CD4-positive, alpha-beta memory T cell (primary cell): ENCODE measurements at regions of chr1 and their contacts with region 1.

Region 1: DNA sequence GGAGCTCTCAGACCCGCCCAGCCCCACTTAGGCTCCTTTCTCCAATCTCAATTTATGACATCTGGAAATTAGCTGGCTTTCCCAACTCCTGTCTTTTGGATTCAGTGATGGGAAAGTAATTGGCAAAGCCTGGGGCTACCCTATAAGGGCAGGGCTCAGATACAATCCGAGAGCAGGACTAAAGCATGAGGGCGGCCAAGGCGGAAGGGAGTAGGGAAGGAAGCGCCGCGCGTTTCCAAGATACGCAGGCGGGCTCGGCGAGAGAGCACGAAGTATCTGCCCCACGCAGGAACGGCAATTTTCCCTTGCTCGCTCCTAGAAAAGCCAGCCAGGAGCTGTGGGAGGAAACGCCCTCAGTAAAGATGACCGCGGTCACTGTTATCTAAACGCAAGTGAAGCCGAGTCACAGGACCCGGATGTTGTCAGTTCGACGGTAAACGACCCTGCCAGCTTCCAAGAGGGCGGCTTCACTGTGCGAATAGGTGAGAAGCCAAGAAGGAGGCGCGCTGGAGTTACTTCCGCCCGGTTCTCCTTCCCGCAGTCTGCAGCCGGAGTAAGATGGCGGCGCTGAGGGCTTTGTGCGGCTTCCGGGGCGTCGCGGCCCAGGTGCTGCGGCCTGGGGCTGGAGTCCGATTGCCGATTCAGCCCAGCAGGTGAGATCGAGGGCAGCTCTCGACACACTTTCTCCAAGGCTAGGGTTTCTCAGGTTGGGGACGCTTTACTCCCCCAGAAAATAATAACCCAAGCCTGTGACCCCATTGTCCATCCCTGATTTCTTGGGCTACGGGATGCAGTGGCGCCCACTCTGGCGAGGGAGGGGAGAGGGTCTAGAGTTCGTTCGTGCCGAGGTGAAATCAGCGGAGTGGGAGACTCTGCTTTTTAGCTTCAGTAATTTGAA is at the start of gene NDUFS2:
- DNase-seq: peak; percentile 91 to 98 (median 94)
- H3K4me3 ChIP-seq: peak within 1 kb of the TSS; percentile 85 to 98
- H3K4me3 Mint-ChIP-seq: peak within 1 kb of the TSS; percentile 95 to 98 (median 96)
- H3K27ac ChIP-seq: peak within 1 kb of the TSS; percentile 96
- H3K27ac Mint-ChIP-seq: peak within 1 kb of the TSS; percentile 94 to 99 (median 99)
- H3K4me1 ChIP-seq: peaks cover 66% of the 10 kb centered on the region
- H3K4me1 Mint-ChIP-seq: peaks cover 32 to 68% (median 56%) of the 10 kb centered on the region in 4 donors
- H3K27me3 ChIP-seq: no peaks in the 10 kb centered on the region
- H3K27me3 Mint-ChIP-seq: peaks cover 0 to 1% of the 10 kb centered on the region in 2 donors
- total RNA-seq, gene NDUFS2: 89.9 to 100 TPM

Region 2: DNA sequence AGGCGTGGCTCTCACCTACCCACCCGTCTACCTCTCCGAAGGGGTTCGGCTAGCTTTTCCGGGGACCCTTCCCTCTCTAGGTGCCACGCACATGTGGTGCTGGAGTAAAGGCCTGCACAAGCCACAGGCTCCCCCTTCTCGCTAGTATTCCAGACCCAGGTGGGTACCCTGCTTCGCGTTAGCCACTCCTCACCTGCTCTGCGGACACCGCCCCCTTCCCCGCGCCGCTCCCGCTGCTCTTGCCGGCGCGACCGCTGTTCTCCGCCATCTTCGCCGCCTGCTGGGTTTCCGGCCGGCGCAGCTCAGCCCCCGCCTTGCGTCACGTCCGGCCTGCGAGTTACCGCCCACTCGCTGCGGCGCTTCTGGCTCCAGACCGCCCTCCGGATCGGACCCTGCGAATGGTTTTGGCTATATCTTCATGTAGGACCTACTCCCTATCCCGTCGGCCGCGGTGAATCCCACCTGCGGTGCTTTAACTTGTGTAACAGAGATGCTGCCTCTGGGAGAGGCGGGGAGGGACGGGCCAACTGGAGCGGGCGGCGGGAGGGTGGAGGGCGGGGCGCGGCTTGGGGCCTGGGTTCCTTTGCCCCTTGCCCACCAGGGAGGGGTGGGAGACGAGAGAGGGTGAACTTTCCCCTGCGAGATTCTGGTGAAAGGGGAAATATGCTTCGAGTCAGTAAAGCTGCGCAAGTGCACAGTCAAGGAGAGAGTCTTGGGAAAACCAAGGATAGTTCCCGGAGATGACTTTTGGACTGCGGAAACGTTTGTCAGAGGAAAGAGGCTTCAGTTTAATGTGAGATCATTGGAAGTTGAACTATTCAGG is 84.1 kb before region 1 on chr1 and contains the starts of genes NIT1 and PFDN2:
- CTCF ChIA-PET with region 1: no interaction called
- POLR2A ChIA-PET with region 1: interaction called, 12 read pairs
- intact Hi-C with region 1: no loop called
- DNase-seq: peak; percentile 83 to 87 (median 86)
- H3K4me3 ChIP-seq: peak within 1 kb of the TSS; percentile 32 to 95
- H3K4me3 Mint-ChIP-seq: peak within 1 kb of the TSS; percentile 94 to 98 (median 96)
- H3K27ac ChIP-seq: peak within 1 kb of the TSS; percentile 94
- H3K27ac Mint-ChIP-seq: peak within 1 kb of the TSS; percentile 94 to 99 (median 98)
- H3K4me1 ChIP-seq: peaks cover 64% of the 10 kb centered on the region
- H3K4me1 Mint-ChIP-seq: peaks cover 36 to 79% (median 61%) of the 10 kb centered on the region in 4 donors
- H3K27me3 ChIP-seq: no peaks in the 10 kb centered on the region
- H3K27me3 Mint-ChIP-seq: no peaks in the 10 kb centered on the region
- total RNA-seq, gene NIT1: 49.0 to 50.5 TPM
- total RNA-seq, gene PFDN2: 40.8 to 41.0 TPM

Region 3: GRCh38 chr1:161153679-161154426 is 48.2 kb before region 1 on chr1 and contains the start of gene UFC1:
- CTCF ChIA-PET with region 1: interaction called, 7 read pairs
- POLR2A ChIA-PET with region 1: interaction called, 34 read pairs
- intact Hi-C with region 1: no loop called
- DNase-seq: peak; percentile 87 to 93 (median 90)
- H3K4me3 ChIP-seq: peak within 1 kb of the TSS; percentile 37 to 100
- H3K4me3 Mint-ChIP-seq: peak within 1 kb of the TSS; percentile 96 to 100 (median 99)
- H3K27ac ChIP-seq: peak within 1 kb of the TSS; percentile 99
- H3K27ac Mint-ChIP-seq: peak within 1 kb of the TSS; percentile 99 to 100 (median 100)
- H3K4me1 ChIP-seq: peaks cover 23% of the 10 kb centered on the region
- H3K4me1 Mint-ChIP-seq: peaks cover 23 to 46% (median 32%) of the 10 kb centered on the region in 4 donors
- H3K27me3 ChIP-seq: no peaks in the 10 kb centered on the region
- H3K27me3 Mint-ChIP-seq: no peaks in the 10 kb centered on the region
- total RNA-seq, gene UFC1: 87.2 to 87.4 TPM

Region 4: DNA sequence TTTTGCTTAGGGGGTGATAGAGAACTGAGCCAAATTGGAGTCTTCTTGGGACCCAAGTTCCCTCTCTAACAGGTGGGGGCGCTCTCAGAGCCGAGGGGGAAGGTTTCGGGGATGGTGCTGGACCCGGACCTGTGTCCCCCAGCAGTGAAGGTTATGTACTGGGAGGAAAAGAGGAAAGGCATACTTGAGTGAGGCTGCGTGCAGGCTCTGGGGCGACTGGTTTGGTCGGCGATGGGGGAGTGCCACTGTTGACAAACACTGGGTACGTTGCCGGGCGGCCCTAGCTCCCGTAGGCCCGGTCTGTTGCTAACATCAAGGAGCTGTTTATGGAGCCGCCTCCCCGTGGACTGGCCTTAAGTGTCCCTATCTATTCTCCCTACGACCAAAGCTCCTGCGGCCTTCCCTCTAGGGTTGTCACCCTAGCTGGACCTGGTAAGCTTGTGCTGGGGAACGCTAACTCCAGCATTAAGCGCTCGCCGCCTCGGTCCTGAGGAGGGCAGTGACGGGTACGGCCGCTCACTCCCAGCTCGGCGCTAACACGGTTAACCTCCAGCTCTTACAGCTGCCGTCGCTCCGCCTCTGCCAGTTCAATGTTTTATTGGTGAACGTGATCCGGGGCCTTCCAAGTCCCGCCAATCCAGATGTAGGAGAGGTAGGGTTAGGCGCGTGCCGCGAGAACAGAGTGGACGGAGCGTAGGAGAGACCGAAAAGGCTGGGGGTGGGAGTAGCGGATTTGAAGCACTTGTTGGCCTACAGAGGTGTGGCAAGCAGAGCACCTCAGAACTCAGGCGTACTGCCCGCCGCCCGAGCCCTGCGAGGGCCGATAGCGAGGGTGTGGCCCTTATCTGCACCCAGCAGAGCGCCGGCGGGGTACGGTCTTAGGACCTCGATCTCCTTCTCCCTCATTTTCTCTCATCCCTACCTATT is 36.1 kb before region 1 on chr1 and contains the start of gene PPOX:
- CTCF ChIA-PET with region 1: interaction called, 45 read pairs
- POLR2A ChIA-PET with region 1: interaction called, 89 read pairs
- intact Hi-C with region 1: loop called (anchors 1 kb)
- DNase-seq: peak; percentile 95 to 98 (median 96)
- H3K4me3 ChIP-seq: peak within 1 kb of the TSS; percentile 73 to 77
- H3K4me3 Mint-ChIP-seq: peak within 1 kb of the TSS; percentile 89 to 96 (median 94)
- H3K27ac ChIP-seq: peak within 1 kb of the TSS; percentile 83
- H3K27ac Mint-ChIP-seq: peak within 1 kb of the TSS; percentile 96 to 100 (median 100)
- H3K4me1 ChIP-seq: peaks cover 37% of the 10 kb centered on the region
- H3K4me1 Mint-ChIP-seq: peaks cover 25 to 75% (median 45%) of the 10 kb centered on the region in 4 donors
- H3K27me3 ChIP-seq: no peaks in the 10 kb centered on the region
- H3K27me3 Mint-ChIP-seq: no peaks in the 10 kb centered on the region
- total RNA-seq, gene PPOX: 59.4 to 69.8 TPM

Region 5: DNA sequence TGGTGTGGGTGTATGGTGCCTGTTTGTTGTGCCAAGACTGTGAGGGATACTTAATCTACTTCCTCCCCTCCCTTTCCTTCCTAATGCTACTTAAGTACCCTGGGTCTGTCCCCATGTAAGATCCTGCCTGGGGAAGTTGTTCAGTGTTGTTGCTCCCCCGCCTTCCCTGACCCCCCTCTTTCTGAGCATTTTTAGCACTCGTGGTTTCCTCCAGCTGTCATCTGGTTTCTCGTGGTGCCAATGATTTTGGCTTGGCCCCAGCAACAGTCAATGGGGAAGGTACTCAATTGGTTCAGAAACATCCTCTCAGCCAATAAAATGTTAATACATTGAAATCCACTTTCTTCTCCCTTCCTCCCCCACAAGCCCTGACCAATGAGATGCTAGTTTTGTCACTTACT is 16.8 kb before region 1 on chr1:
- CTCF ChIA-PET with region 1: interaction called, 53 read pairs
- POLR2A ChIA-PET with region 1: interaction called, 134 read pairs
- intact Hi-C with region 1: loop called (anchors 1 kb)
- DNase-seq: peak; percentile 86 to 92 (median 88)
- H3K4me3 ChIP-seq: peak overlapping the region; percentile 8 to 25
- H3K4me3 Mint-ChIP-seq: peak overlapping the region; percentile 73 to 89 (median 83)
- H3K27ac ChIP-seq: peak overlapping the region; percentile 47
- H3K27ac Mint-ChIP-seq: peak overlapping the region; percentile 86 to 96 (median 92)
- H3K4me1 ChIP-seq: peaks cover 94% of the 10 kb centered on the region
- H3K4me1 Mint-ChIP-seq: peaks cover 57 to 88% (median 78%) of the 10 kb centered on the region in 4 donors
- H3K27me3 ChIP-seq: no peaks in the 10 kb centered on the region
- H3K27me3 Mint-ChIP-seq: no peaks in the 10 kb centered on the region

Region 6: DNA sequence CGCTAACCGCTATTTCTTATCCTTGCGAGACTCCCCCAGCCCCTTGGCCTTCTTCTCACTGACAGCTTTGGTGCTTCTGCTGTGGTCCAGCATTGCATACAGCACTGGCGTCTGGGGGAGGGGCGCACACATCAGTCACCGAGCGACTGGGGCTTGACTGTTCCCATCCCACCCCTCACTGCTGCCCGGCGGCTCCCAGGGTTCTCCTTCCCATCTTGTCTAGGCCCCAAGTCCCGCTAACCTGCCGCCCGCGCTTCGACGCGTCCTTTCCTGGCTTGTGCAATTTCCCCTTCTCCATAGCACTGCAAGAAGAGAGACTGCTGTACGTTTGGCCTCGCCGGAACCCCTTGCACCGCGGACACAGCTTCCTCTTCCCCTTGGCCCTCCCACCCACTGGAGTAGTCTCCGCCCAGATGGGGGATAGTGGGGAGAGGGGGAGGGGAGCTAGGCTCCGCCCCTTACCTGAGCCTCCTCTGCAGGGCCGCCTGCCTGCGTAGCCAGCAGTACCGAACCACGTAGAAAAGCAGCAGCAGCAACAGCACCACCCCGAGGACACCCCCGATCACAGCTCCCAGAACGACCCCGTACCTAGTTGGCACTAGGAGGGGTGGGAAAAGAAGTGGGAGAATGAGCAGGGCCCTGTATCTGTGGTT is 103.9 kb after region 1 on chr1:
- CTCF ChIA-PET with region 1: interaction called, 5 read pairs
- POLR2A ChIA-PET with region 1: interaction called, 15 read pairs
- intact Hi-C with region 1: loop called (anchors 2 kb)
- DNase-seq: peak; percentile 89 to 92 (median 90)
- H3K4me3 ChIP-seq: peak overlapping the region; percentile 48 to 86
- H3K4me3 Mint-ChIP-seq: peak overlapping the region; percentile 89 to 100 (median 97)
- H3K27ac ChIP-seq: peak overlapping the region; percentile 77
- H3K27ac Mint-ChIP-seq: peak overlapping the region; percentile 91 to 99 (median 96)
- H3K4me1 ChIP-seq: peaks cover 29% of the 10 kb centered on the region
- H3K4me1 Mint-ChIP-seq: peaks cover 17 to 41% (median 29%) of the 10 kb centered on the region in 4 donors
- H3K27me3 ChIP-seq: no peaks in the 10 kb centered on the region
- H3K27me3 Mint-ChIP-seq: no peaks in the 10 kb centered on the region

Region 7: DNA sequence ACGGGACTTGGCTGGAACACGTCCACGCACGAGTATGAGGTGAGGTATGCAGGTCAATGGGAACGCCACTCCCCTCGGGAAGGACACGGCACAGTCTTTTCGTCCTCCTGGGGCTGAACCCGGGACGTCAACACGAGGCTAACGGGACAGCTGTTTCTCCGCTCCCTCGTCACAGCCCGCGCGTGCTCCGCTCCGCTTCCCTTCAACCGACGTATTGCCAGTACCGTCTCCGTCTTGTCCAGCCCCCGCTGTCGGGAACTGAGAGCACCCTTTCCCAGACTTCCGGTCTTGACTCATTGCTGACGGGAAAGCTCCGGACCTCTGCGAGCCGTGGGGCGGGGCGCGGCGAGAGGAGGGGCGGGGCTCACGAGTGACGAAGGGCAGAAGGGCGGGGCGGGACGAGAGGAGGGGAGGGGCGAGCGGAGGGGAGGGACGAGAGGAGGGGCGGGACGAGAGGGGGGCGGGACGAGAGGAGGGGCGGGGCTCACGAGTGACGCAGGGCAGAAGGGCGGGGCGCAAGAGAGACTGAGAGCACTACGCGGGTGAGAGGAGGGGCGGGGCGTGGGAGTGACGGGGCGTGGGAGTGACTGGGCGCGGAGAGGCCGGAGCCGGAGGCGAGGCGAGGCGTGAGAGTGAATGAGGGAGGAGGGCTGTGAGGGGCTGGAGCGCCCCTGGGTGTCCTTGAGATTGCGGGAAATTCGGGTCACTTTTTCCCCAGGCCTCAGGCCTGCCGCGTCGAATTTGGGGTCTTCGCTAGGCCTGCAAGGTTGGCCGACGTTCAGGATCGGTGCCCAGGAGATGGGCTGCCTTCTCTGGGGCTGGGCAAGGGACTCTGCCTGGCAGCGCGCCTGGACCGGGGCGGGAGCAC is 187.8 kb after region 1 on chr1:
- CTCF ChIA-PET with region 1: interaction called, 3 read pairs
- POLR2A ChIA-PET with region 1: interaction called, 12 read pairs
- intact Hi-C with region 1: no loop called
- DNase-seq: peak; percentile 91 to 96 (median 92)
- H3K4me3 ChIP-seq: peak overlapping the region; percentile 79 to 86
- H3K4me3 Mint-ChIP-seq: peak overlapping the region; percentile 84 to 95 (median 94)
- H3K27ac ChIP-seq: peak overlapping the region; percentile 87
- H3K27ac Mint-ChIP-seq: peak overlapping the region; percentile 94 to 99 (median 97)
- H3K4me1 ChIP-seq: peaks cover 29% of the 10 kb centered on the region
- H3K4me1 Mint-ChIP-seq: peaks cover 12 to 48% (median 33%) of the 10 kb centered on the region in 4 donors
- H3K27me3 ChIP-seq: no peaks in the 10 kb centered on the region
- H3K27me3 Mint-ChIP-seq: no peaks in the 10 kb centered on the region